ENCODE measurements at regions of chr14 and their contacts with region 1.

Region 1: GRCh38 chr14:36070031-36070719 is 106.3 kb downstream of the PTCSC3 start:
- DNase-seq: peak; percentile 39
- H3K4me3 ChIP-seq: peak overlapping the region in 1 of 2 experiments; percentile 32; a peak in 1 of 4 replicates
- H3K27ac ChIP-seq: no peak overlapping the region
- H3K4me1 ChIP-seq: no peaks in the 10 kb centered on the region; a peak in 1 of 4 replicates
- H3K27me3 ChIP-seq: peaks cover 45% of the 10 kb centered on the region; the same call in 1 of the 2 replicates
- CTCF ChIP-seq: peak; percentile 85
- EP300 ChIP-seq: no peak
- RAD21 ChIP-seq: peak; percentile 73

Region 2: GRCh38 chr14:35883677-35884293 is 186.4 kb before region 1 on chr14:
- CTCF ChIA-PET with region 1: interaction called, 69 read pairs
- POLR2A ChIA-PET with region 1: no interaction called
- DNase-seq: peak; percentile 37
- H3K4me3 ChIP-seq: no peak overlapping the region
- H3K27ac ChIP-seq: no peak overlapping the region
- H3K4me1 ChIP-seq: peaks cover 7 to 8% of the 10 kb centered on the region in 2 experiments
- H3K27me3 ChIP-seq: no peaks in the 10 kb centered on the region
- CTCF ChIP-seq: peak; percentile 78
- EP300 ChIP-seq: no peak
- RAD21 ChIP-seq: peak; percentile 61

Region 3: DNA sequence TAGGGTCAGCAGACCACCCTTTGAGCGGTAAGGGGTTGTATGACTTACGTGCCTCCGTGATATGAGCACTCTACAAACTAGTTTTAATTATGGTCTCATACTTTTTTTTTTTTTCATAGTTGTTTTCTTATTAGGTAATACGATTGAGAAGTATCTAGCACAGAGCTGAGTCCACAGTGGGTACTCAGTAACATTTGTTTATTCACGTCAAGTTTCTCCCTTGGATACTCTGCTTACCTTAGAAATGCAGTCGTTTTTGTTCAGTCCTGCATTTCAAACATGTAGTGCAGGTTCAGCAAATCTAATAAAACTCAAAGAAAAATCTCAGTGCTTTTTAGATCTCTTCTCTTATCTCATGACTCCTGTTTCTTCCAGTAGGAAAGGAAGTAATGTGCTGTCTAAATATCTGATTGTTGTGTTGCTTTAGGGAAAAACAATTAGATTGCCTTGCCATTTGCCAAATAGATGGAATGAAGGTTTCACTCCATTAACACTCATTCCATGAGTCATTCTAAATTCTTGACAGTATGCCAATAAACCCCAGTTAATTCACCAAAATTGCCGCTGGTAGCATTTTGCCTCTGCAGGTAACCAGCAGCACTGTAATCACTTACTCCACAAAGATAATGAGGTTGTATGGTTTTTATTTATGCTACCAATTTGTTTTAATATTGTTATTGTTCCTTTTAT is 12.6 kb before region 1 on chr14:
- CTCF ChIA-PET with region 1: interaction called, 38 read pairs
- POLR2A ChIA-PET with region 1: no interaction called
- DNase-seq: no peak
- H3K4me3 ChIP-seq: no peak overlapping the region
- H3K27ac ChIP-seq: no peak overlapping the region
- H3K4me1 ChIP-seq: peaks cover 0 to 4% of the 10 kb centered on the region in 2 experiments; a peak in 2 of 4 replicates
- H3K27me3 ChIP-seq: peaks cover 10% of the 10 kb centered on the region; the same call in 1 of the 2 replicates
- CTCF ChIP-seq: no peak
- EP300 ChIP-seq: no peak
- RAD21 ChIP-seq: no peak

Region 4: GRCh38 chr14:36254020-36254624 is 183.9 kb after region 1 on chr14:
- CTCF ChIA-PET with region 1: interaction called, 11 read pairs
- POLR2A ChIA-PET with region 1: no interaction called
- DNase-seq: no peak
- H3K4me3 ChIP-seq: peak overlapping the region; percentile 30 to 46; a peak in 2 of 4 replicates
- H3K27ac ChIP-seq: no peak overlapping the region
- H3K4me1 ChIP-seq: no peaks in the 10 kb centered on the region
- H3K27me3 ChIP-seq: peaks cover 4% of the 10 kb centered on the region
- CTCF ChIP-seq: peak; percentile 62
- EP300 ChIP-seq: no peak
- RAD21 ChIP-seq: no peak

Region 5: GRCh38 chr14:36373982-36374673 is 304.0 kb after region 1 on chr14:
- CTCF ChIA-PET with region 1: interaction called, 38 read pairs
- POLR2A ChIA-PET with region 1: no interaction called
- DNase-seq: peak; percentile 46
- H3K4me3 ChIP-seq: no peak overlapping the region; a peak in 1 of 4 replicates
- H3K27ac ChIP-seq: no peak overlapping the region
- H3K4me1 ChIP-seq: no peaks in the 10 kb centered on the region
- H3K27me3 ChIP-seq: no peaks in the 10 kb centered on the region; the same call in 1 of the 2 replicates
- CTCF ChIP-seq: peak; percentile 87
- EP300 ChIP-seq: no peak
- RAD21 ChIP-seq: peak; percentile 77

Measured in SK-N-SH (cell line).